ENCODE measurements at regions of chr7 and their contacts with region 1.

Region 1: GRCh38 chr7:101138213-101138870 is 11.4 kb downstream of the SERPINE1 start:
- DNase-seq: peak; percentile 89
- H3K4me3 ChIP-seq: no peak overlapping the region
- H3K27ac ChIP-seq: peak overlapping the region; percentile 81
- H3K27me3 ChIP-seq: no peaks in the 10 kb centered on the region
- CTCF ChIP-seq: peak; percentile 69

Region 2: DNA sequence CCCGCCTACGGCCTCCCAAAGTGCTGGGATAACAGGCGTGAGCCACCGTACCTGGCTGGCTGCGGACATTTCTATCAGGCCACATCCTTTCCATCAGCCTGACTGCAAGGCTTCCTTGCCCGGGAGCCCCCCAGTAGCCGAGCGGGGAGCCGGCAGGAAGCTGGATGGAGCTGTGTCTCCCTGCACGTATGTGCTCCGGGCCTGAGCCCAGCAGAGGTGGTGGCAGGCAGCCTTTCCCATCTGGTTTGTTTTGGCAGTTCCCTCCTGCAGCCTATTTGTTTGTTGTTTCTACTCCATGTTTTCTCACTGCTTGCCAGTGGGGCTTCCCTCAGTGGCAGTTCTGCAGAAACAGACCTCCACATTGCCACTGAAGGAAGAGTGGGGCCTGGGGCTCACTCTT is 427.0 kb before region 1 on chr7:
- CTCF ChIA-PET with region 1: no interaction called
- POLR2A ChIA-PET with region 1: no interaction called
- DNase-seq: no peak
- H3K4me3 ChIP-seq: no peak overlapping the region
- H3K27ac ChIP-seq: no peak overlapping the region
- H3K27me3 ChIP-seq: peaks cover 7% of the 10 kb centered on the region
- CTCF ChIP-seq: no peak

Region 3: DNA sequence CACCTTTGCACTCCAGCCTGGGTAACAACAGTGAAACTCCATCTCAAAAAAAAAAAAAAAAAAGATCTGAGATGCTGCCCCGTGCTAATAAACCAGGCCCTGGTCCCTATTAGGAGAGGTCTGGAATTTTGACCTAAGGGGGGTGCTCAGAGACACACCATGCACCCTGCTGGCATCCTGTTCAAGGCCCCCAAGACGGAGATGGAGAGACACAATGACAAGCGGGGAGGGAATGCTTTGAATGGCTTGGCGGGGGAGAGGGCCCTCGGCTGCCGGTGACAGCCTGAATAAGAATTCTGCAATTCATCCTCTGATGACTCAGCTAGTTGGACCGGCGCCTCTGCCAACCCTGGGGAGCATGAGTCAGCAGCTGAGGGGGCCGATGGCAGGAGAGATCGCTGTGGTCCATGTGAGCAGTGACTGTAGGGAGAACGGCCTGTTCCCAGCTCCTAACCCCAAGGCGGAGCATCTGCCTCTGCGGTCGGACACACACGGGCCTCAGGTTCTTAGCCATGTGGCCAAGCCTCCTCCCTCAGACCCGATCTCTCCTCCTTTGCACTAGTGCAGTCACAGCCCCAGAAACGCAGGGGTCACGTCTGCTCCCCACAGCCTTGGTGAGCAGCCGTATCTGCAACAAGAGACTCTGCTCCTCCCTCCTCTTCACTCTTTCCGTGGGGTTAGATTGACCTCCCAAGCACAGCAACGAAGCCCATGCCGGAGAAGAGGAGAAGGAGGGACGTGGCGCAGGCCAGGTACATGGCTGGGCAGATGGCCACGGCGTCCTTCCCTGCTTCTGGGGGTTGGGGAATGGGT is 38.2 kb before region 1 on chr7:
- CTCF ChIA-PET with region 1: interaction called, 10 read pairs
- POLR2A ChIA-PET with region 1: interaction called, 6 read pairs
- DNase-seq: peak; percentile 97
- H3K4me3 ChIP-seq: peak overlapping the region; percentile 20; the same call in 1 of the 2 replicates
- H3K27ac ChIP-seq: peak overlapping the region; percentile 99
- H3K27me3 ChIP-seq: no peaks in the 10 kb centered on the region
- CTCF ChIP-seq: no peak

Region 4: DNA sequence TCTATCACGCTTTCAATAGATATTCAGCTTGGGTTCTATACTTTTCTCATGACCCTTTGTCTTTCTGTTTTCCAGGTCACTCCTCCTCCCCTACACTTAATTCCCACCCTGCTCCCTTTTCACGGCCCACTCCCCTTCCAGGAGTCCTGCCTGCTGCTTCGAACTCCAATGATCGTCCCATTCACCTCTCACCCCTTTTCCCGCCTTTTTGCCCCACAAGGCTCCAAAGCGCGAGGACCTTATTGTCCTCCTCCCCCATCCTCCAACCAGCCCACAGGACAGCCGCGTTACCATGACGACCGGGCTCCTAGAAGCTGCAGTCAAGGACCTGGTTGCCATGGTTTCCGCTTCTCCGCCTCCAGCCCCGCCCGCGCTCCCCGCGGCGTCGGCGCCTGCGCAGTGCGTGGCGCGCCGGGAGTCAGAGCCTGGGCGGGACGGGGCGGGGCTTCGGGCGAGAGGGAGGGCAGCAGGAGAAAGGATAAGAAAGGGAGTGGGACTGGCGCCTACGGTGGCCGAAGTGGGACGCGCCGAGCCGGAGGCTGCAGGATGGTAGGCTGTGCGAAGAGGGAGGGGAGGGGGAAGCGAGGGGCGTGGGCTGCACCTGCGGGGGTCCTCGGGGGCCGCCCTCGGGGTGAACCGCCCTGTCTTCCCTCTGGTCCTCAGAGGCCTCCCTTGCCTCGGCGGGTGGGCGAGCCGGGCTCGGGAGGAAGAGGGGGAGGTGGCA is 15.8 kb after region 1 on chr7 and contains the start of gene AP1S1:
- CTCF ChIA-PET with region 1: interaction called, 39 read pairs
- POLR2A ChIA-PET with region 1: no interaction called
- DNase-seq: peak; percentile 83
- H3K4me3 ChIP-seq: peak within 1 kb of the TSS; percentile 82
- H3K27ac ChIP-seq: peak within 1 kb of the TSS; percentile 52
- H3K27me3 ChIP-seq: peaks cover 4% of the 10 kb centered on the region
- CTCF ChIP-seq: no peak
- polyA plus RNA-seq, gene AP1S1: 197 and 227 TPM in 2 replicates

Region 5: DNA sequence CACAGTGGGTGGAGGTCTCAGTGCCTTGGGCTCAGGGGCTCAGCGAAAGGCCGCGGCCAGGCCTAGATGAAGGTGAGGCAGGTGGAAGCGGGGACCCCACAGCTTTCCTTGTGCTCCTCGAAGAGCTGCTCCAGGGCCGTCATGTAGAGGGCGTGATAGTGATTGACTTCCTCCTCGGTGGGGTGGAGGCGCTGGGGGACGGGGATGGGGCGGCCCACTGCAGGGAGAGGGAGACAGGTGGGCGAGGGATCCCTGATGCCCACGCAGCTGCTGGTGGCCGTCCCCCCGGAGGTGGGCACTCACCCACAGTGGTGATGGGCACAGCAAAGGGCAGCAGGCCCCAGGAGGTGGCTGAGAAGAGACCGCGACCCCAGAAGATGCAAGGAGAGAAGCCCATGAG is 57.5 kb after region 1 on chr7:
- CTCF ChIA-PET with region 1: interaction called, 262 read pairs
- POLR2A ChIA-PET with region 1: no interaction called
- DNase-seq: no peak
- H3K4me3 ChIP-seq: no peak overlapping the region
- H3K27ac ChIP-seq: no peak overlapping the region
- H3K27me3 ChIP-seq: peaks cover 14% of the 10 kb centered on the region
- CTCF ChIP-seq: no peak

Region 6: DNA sequence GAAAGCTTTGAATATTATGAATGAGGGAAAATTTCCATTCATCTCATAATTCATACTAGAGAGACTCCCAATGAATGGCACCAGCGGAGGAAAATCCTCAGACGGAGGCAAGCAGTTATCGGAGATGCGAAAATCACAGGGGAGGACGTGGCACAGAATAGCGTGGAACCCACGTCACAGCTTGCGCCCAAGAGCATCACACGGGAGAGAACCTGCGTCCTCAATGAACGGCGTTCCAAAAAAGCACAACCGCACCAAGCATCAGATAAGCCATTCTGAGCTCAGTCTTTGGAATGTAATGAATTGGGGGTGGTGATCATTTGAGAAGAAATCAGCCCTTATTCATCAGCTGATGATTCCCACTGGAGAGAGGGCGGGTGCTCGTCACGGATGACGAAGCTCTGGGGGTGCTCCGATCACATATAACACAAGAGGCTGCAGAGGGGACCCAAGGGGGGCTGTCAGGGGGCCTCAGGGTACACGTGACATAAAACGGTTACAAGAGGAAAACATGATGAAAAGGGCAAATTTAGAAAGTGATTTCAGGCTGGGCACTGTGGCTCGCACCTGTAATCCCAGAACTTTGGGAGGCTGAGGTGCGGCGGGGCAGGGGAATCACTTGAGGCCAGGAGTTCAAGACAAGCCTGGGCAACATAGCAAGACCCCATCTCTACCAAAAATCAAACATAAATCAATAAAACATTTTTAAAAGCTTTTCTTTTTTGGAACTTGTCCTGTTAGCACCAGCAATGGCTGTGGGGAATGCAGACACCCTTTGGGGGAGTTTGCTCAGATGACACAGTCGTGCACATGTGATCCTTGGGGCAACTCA is 140.3 kb after region 1 on chr7:
- CTCF ChIA-PET with region 1: interaction called, 94 read pairs
- POLR2A ChIA-PET with region 1: interaction called, 11 read pairs
- DNase-seq: no peak
- H3K4me3 ChIP-seq: no peak overlapping the region
- H3K27ac ChIP-seq: no peak overlapping the region
- H3K27me3 ChIP-seq: peaks cover 14% of the 10 kb centered on the region
- CTCF ChIP-seq: no peak